Heart left ventricle (tissue), 16 donors: ENCODE measurements at regions of chr5 and their contacts with region 1.

Region 1: DNA sequence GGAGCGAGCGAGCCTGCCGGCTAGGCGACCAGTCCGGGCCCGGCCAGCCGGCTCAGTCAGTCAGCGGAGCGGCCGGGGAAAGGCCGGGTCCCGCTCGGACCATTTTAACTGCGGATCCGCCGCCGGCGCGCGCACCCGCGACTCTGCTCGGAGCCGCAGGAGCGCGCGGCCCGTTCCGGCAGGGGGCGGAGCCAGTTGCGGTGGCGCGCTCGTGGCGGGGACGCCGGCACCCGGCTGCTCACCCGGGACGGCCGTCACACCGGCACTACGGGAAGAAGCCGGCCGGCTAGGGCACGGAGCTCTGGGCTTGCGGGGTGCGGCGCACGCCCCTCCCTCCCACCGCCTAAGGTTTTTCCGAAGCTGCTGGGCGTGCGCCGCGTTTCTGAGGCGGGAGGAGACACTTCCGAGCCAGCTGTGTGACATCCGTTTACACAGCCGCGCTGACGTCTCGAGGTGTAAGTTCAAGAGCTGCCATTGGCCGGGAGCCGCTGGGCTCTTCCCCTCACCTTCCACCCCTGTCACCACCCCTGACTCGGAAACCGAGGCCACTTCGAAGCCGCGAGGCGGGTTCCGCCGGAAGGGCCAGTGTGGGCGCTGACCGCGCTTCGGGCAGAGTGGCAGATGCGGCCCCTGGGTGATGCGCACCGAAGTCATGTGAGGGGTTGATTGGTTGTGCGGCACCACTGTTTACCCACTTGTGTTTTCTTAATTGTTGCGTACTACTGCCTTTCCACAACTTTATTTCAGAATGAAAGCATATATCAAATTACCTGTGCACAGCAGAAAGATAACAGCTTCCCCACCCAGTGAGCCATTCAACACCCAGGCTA is at the start of gene FBXL17:
- DNase-seq: peak; percentile 94 to 97 (median 96)
- ATAC-seq: peak; percentile 87 to 92 (median 88)
- H3K4me3 ChIP-seq: peak within 1 kb of the TSS; percentile 66 to 96 (median 92)
- H3K27ac ChIP-seq: peak within 1 kb of the TSS; percentile 95 to 100 (median 99)
- H3K4me1 ChIP-seq: peaks cover 0 to 25% (median 16%) of the 10 kb centered on the region in 12 donors
- H3K27me3 ChIP-seq: no peaks in the 10 kb centered on the region
- CTCF ChIP-seq: peak in 1 of 12 donors; percentile 24
- POLR2A ChIP-seq: peak in 1 of 2 donors; percentile 88
- total RNA-seq, gene FBXL17: 25.9 to 39.4 (median 33.6) TPM

Region 2: GRCh38 chr5:108727651-108728565 is 345.7 kb after region 1 on chr5:
- intact Hi-C with region 1: no loop called
- DNase-seq: peak; percentile 93 to 95 (median 93)
- ATAC-seq: peak; percentile 100
- H3K4me3 ChIP-seq: peak overlapping the region; percentile 40 to 95 (median 84)
- H3K27ac ChIP-seq: peak overlapping the region; percentile 72 to 95 (median 90)
- H3K4me1 ChIP-seq: peaks cover 0 to 33% (median 5%) of the 10 kb centered on the region in 12 donors
- H3K27me3 ChIP-seq: no peaks in the 10 kb centered on the region
- CTCF ChIP-seq: peak in 3 of 12 donors; percentile 10 to 38 (median 13)
- POLR2A ChIP-seq: peak in 1 of 2 donors; percentile 76

Region 3: DNA sequence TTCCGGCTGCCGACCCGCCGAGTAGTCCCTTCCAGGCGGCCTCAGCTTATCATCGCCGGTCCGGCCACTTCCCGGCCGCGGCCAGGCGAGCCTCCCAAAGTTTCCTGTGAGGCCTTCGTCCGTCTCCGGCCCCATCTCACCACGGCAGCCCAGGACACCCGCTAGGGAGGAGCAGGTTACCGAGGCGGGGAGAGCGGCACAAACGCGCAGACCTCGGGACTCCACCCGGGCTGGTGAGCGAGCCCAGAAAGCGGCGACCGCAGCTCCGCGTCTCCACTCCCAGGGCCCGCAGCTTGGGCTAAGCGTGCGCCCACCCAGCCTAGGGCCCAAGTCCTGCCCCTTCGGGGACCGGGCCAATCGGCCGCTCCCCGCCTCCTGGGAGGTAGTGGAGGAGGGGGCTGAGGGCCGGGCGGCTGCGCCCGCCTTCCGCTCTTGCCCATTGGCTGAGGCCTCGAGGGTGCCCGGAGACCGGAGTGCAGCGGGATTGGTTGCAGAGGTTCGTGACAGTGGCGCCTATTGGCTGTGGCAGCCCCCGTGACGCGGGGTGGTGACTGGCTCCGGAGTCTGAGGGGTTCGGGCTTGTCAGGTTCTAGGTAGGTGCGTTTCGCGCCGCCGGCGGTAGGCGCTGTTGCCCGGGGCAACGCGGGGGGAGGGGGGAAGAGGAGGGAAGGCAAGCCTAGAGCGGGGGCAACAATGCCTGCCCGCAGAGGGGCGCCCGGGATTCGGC is 366.4 kb after region 1 on chr5:
- intact Hi-C with region 1: loop called in 1 of 10 experiments (anchors 10 kb)
- DNase-seq: peak; percentile 99 to 100 (median 99)
- ATAC-seq: peak; percentile 98 to 99 (median 98)
- H3K4me3 ChIP-seq: peak overlapping the region; percentile 83 to 98 (median 91)
- H3K27ac ChIP-seq: peak overlapping the region; percentile 91 to 100 (median 97)
- H3K4me1 ChIP-seq: peaks cover 0 to 31% (median 8%) of the 10 kb centered on the region in 12 donors
- H3K27me3 ChIP-seq: no peaks in the 10 kb centered on the region
- CTCF ChIP-seq: peak in 7 of 12 donors; percentile 17 to 34 (median 21)
- POLR2A ChIP-seq: peak; percentile 89 to 99

Region 4: DNA sequence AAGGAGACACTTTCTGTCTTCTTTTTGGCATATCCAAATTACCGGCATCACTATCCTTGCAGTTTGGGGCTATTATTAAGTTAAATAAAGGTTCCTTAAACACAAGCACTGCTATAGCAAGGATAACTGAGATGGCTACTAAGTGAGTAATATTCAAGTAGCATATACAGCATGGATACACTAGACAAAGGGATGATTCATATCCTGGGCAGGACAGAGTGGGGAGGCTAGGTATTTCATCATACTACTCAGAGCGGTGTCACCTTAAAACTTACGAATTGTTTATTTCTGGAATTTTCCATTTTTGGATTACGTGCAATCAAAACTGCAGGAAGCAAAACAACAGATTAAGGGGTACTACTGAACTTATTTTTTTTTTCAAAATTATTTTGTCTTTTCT is 419.6 kb after region 1 on chr5:
- intact Hi-C with region 1: no loop called
- DNase-seq: no peak
- ATAC-seq: peak in 1 of 4 donors; percentile 60
- H3K4me3 ChIP-seq: no peak overlapping the region
- H3K27ac ChIP-seq: no peak overlapping the region
- H3K4me1 ChIP-seq: no peaks in the 10 kb centered on the region
- H3K27me3 ChIP-seq: no peaks in the 10 kb centered on the region
- CTCF ChIP-seq: no peak
- POLR2A ChIP-seq: no peak